ENCODE measurements at regions of chr3 and their contacts with region 1.

Region 1: DNA sequence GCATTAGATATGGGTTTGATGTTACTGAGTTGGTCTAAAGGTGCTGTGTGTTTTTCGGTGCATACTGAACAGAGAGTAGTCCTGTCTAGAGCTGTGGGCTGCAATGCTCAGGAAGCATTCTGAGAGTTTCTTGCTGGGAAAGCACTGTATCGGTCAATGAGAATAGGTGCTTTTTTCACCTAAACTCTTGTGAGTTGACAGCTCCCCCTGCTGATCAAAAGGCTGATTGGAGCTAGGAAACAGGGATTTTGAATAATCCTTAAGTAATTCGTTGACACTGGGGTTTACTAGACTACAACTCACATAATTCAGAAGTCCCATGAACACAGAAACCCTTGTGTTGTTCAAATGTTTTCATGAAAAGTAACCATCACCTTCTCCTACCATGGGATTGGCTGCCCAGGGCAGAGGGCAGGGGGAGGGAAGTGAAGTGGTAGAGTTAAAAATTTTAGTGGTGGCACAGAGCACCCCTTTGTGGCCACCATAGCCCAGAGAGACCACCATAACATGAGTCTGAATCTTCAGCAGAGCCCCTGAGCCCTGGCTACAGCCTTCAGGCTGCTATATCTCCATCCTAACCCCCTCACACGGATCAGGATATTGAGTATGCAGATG is 13.0 kb upstream of the MANF start:
- DNase-seq: peak; percentile 78
- H3K4me3 Mint-ChIP-seq: no peak overlapping the region
- H3K27ac Mint-ChIP-seq: no peak overlapping the region
- H3K4me1 Mint-ChIP-seq: peaks cover 2% of the 10 kb centered on the region
- H3K27me3 Mint-ChIP-seq: no peaks in the 10 kb centered on the region

Region 2: DNA sequence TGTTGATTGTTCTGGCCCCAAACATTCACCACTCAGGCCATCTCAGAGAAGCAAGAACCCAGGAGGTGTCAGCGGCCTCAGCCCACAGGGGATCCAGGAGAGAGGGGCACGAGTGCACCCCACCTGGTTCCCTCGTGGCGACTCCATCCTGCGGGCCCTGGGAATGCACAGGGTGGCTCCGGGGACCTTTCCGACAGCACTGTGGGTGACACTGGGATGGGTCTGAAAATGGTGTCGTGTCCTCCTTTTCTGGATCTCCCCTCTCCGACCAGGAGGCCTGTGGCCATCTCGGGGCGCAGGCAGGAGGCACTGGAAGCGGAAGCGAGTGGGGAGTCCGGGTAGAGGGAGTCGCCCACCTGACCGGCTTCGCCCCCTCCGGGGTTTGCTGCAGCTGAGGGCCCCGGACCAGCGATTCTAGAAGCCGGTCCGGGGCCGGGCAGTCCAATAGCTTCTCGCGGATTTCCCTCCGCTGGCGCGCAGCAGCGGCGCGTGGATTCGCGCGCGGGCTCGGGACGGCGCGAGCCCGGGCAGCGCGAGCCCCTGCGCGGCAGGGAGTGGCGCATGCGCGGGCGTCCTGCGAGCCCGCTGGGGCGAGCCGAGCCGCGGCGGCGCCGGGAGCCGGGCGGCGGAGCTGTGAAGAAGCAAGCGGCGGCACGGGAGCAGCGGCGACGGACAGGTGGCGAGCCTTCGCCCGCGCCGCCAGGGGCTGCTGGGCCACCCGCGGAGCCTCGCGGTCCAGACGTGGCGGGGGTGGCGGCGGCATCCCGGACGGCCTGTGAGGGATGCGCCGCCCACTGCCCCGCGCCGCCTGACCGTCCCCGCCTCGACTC is 697.5 kb before region 1 on chr3 and contains the start of gene DOCK3:
- CTCF ChIA-PET with region 1: interaction called, 3 read pairs
- intact Hi-C with region 1: loop called (anchors 5 kb)
- DNase-seq: peak; percentile 57
- H3K4me3 Mint-ChIP-seq: peak within 1 kb of the TSS; percentile 64
- H3K27ac Mint-ChIP-seq: peak within 1 kb of the TSS; percentile 9
- H3K4me1 Mint-ChIP-seq: peaks cover 7% of the 10 kb centered on the region
- H3K27me3 Mint-ChIP-seq: peaks cover 37% of the 10 kb centered on the region
- total RNA-seq, gene DOCK3: 1.6 to 1.7 TPM

Region 3: DNA sequence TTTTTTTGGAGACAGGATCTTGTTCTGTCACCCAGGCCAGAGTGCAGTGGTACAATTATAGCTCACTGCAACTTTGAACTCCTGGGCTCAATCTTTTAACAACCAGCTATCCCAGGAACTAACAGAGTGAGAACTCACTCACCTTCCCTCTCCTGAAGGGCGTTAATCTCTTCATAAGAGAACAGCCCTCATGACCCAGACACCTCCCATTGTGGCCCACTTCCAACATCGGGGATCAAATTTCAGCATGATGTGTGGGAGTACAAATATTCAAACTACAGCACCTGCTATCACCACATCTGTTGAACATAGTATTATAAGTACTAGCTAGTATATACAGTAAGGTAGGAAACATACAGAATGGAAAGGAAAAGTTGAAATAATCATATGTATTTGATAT is 564.8 kb before region 1 on chr3:
- CTCF ChIA-PET with region 1: no interaction called
- intact Hi-C with region 1: no loop called
- DNase-seq: no peak
- H3K4me3 Mint-ChIP-seq: no peak overlapping the region
- H3K27ac Mint-ChIP-seq: no peak overlapping the region
- H3K4me1 Mint-ChIP-seq: no peaks in the 10 kb centered on the region
- H3K27me3 Mint-ChIP-seq: no peaks in the 10 kb centered on the region

Region 4: GRCh38 chr3:51099794-51100535 is 272.1 kb before region 1 on chr3:
- CTCF ChIA-PET with region 1: interaction called, 7 read pairs
- intact Hi-C with region 1: loop called (anchors 1 kb)
- DNase-seq: peak; percentile 49
- H3K4me3 Mint-ChIP-seq: no peak overlapping the region
- H3K27ac Mint-ChIP-seq: no peak overlapping the region
- H3K4me1 Mint-ChIP-seq: peaks cover 9% of the 10 kb centered on the region
- H3K27me3 Mint-ChIP-seq: no peaks in the 10 kb centered on the region

Region 5: DNA sequence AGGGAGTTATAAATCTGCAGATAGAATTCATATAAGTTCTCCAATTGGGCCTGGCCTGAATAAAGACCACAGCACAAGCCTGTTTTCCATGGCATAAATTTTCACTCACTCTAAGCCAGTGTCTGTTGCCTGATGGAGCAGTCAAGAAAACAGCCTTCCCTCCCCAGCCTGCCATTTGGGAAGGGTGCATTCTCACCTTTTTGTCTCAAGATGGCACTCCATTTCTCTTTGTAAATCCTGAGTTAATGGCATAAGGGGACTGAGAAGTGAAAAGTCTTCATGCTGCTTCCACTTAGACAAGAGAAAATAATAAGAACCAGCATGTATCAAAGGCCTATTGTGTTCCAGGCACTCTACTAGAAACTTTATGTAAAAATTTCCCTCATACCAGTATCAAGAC is 102.6 kb before region 1 on chr3:
- CTCF ChIA-PET with region 1: interaction called, 4 read pairs
- intact Hi-C with region 1: loop called (anchors 1 kb)
- DNase-seq: no peak
- H3K4me3 Mint-ChIP-seq: no peak overlapping the region
- H3K27ac Mint-ChIP-seq: no peak overlapping the region
- H3K4me1 Mint-ChIP-seq: peaks cover 25% of the 10 kb centered on the region
- H3K27me3 Mint-ChIP-seq: no peaks in the 10 kb centered on the region

Measured in activated naive CD4-positive, alpha-beta T cell treated with anti-CD3 and anti-CD28 coated beads for 36 hours (primary cell).